ENCODE measurements at regions of chr12 and their contacts with region 1.

Region 1: GRCh38 chr12:54521293-54522060 is 23.9 kb downstream of the NCKAP1L start:
- DNase-seq: no peak
- H3K4me3 ChIP-seq: no peak overlapping the region
- H3K27ac ChIP-seq: no peak overlapping the region
- H3K4me1 ChIP-seq: no peaks in the 10 kb centered on the region
- H3K27me3 ChIP-seq: peaks cover 98% of the 10 kb centered on the region
- CTCF ChIP-seq: no peak

Region 2: GRCh38 chr12:54042970-54043853 is 478.3 kb before region 1 on chr12:
- CTCF ChIA-PET with region 1: no interaction called
- POLR2A ChIA-PET with region 1: interaction called, 13 read pairs
- intact Hi-C with region 1: no loop called
- DNase-seq: no peak
- H3K4me3 ChIP-seq: no peak overlapping the region
- H3K27ac ChIP-seq: no peak overlapping the region
- H3K4me1 ChIP-seq: no peaks in the 10 kb centered on the region
- H3K27me3 ChIP-seq: peaks cover 43% of the 10 kb centered on the region
- CTCF ChIP-seq: no peak

Region 3: DNA sequence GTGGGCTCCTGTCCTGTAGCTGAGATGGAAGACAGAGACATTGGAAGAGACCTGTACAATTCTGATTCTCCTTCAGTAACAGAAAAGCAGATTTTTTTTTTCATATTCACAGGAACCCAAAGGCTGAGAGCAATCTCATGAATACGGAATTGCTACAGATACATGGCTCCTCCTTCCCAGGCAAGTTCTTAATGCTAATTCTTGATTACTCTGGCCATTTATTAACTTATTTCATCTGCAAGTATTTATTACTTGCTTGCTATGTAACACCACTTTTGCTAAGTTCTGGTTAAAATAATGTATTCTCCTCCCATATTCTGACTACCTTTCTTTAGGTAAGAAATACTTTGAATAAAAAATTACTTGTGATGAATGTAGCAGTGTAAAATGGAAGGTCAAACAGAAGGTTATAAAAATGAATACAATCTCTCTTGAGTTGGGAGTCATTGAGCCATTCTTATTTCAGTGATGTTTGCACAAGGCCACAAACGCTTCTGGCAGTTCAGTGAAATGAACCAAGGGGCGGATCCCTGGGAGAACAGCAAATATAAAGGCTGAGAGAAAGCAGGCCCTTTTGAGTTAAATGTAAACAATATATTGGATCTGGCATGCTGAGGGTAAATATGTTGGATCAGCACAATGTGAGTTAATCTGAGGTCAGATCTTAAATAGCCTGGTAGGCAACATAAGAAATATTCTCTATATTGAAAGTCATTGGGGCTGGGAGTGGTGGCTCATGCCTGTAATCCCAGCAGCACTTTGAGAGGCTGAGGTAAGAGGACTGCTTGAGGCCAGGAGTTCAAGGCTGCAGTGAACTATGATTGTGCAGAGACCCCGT is 370.5 kb after region 1 on chr12:
- CTCF ChIA-PET with region 1: no interaction called
- POLR2A ChIA-PET with region 1: no interaction called
- intact Hi-C with region 1: no loop called
- DNase-seq: no peak
- H3K4me3 ChIP-seq: no peak overlapping the region
- H3K27ac ChIP-seq: no peak overlapping the region
- H3K4me1 ChIP-seq: no peaks in the 10 kb centered on the region
- H3K27me3 ChIP-seq: peaks cover 23% of the 10 kb centered on the region
- CTCF ChIP-seq: no peak

Region 4: GRCh38 chr12:55515696-55516095 is 994.2 kb after region 1 on chr12:
- CTCF ChIA-PET with region 1: no interaction called
- POLR2A ChIA-PET with region 1: no interaction called
- intact Hi-C with region 1: no loop called
- DNase-seq: no peak
- H3K4me3 ChIP-seq: no peak overlapping the region
- H3K27ac ChIP-seq: no peak overlapping the region
- H3K4me1 ChIP-seq: no peaks in the 10 kb centered on the region
- H3K27me3 ChIP-seq: no peaks in the 10 kb centered on the region
- CTCF ChIP-seq: peak; percentile 46; the same call in 1 of the 2 replicates

Measured in PC-9 (cell line).